ENCODE measurements at regions of chr1 and their contacts with region 1.

Region 1: DNA sequence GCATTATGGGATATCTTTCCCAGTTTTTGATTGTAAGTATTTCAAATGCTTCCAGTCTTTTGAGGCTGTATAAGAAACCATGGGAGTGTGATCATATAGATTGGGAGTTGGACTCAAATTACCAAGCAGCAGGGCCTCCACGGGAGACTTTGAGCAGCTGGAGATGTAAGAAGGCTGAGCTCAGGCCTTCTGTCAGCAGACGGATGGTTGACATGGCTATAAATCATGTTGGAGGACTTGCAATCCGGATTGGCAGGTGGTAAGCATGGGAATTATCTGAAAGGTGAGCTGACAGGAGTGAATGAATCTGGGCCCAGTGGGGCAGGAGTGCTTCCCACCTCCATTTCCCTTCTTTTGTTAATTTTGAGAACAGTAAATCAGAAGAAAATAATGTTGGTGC is 83.2 kb upstream of the PPM1J start:
- DNase-seq: no peak
- H3K4me3 ChIP-seq: no peak overlapping the region
- H3K27me3 ChIP-seq: no peaks in the 10 kb centered on the region
- CTCF ChIP-seq: no peak

Region 2: GRCh38 chr1:112809253-112809684 is 11.0 kb after region 1 on chr1:
- CTCF ChIA-PET with region 1: interaction called, 16 read pairs
- POLR2A ChIA-PET with region 1: no interaction called
- DNase-seq: no peak
- H3K4me3 ChIP-seq: no peak overlapping the region
- H3K27me3 ChIP-seq: 0 out of 2 replicates have a peak, but pooled peaks cover 4% of the 10 kb centered on the region
- CTCF ChIP-seq: peak; percentile 98